ENCODE measurements at regions of chr19 and their contacts with region 1.

Region 1: GRCh38 chr19:29735800-29736199 is 20.7 kb upstream of the C19orf12 start:
- DNase-seq: no peak
- ATAC-seq: no peak
- H3K4me3 ChIP-seq: no peak overlapping the region
- H3K4me3 Mint-ChIP-seq: no peak overlapping the region
- H3K27ac ChIP-seq: no peak overlapping the region
- H3K27ac Mint-ChIP-seq: no peak overlapping the region
- H3K4me1 ChIP-seq: no peaks in the 10 kb centered on the region
- H3K4me1 Mint-ChIP-seq: no peaks in the 10 kb centered on the region
- H3K27me3 ChIP-seq: peaks cover 0 to under 1% (median 0%) of the 10 kb centered on the region in 4 experiments
- H3K27me3 Mint-ChIP-seq: peaks cover 16% of the 10 kb centered on the region
- CTCF ChIP-seq: no peak

Region 2: DNA sequence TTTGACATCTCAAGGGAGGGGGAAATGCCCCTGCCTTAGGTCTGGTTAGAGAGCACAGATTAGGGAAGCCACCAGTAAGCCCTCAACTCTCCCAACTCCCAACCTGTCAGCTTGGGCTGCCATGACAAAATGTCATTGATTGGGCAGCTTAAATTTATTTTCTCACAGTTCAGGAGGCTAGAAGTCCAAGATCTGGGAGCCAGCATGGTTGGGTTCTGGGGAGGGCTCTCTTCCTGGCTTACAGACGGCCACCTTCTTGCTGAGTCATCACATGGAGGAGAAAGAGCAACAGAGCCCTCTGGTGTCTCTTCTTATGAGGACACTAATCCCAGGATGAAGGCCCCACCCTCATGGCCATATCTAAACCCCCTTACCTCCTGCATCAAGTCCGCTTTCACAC is 45.0 kb before region 1 on chr19:
- CTCF ChIA-PET with region 1: no interaction called
- POLR2A ChIA-PET with region 1: no interaction called
- intact Hi-C with region 1: no loop called
- DNase-seq: peak; percentile 56
- ATAC-seq: peak; percentile 59
- H3K4me3 ChIP-seq: no peak overlapping the region
- H3K4me3 Mint-ChIP-seq: no peak overlapping the region
- H3K27ac ChIP-seq: no peak overlapping the region
- H3K27ac Mint-ChIP-seq: no peak overlapping the region
- H3K4me1 ChIP-seq: peaks cover 21 to 23% of the 10 kb centered on the region in 2 donors
- H3K4me1 Mint-ChIP-seq: peaks cover 22% of the 10 kb centered on the region
- H3K27me3 ChIP-seq: no peaks in the 10 kb centered on the region
- H3K27me3 Mint-ChIP-seq: no peaks in the 10 kb centered on the region
- CTCF ChIP-seq: peak; percentile 32

Region 3: DNA sequence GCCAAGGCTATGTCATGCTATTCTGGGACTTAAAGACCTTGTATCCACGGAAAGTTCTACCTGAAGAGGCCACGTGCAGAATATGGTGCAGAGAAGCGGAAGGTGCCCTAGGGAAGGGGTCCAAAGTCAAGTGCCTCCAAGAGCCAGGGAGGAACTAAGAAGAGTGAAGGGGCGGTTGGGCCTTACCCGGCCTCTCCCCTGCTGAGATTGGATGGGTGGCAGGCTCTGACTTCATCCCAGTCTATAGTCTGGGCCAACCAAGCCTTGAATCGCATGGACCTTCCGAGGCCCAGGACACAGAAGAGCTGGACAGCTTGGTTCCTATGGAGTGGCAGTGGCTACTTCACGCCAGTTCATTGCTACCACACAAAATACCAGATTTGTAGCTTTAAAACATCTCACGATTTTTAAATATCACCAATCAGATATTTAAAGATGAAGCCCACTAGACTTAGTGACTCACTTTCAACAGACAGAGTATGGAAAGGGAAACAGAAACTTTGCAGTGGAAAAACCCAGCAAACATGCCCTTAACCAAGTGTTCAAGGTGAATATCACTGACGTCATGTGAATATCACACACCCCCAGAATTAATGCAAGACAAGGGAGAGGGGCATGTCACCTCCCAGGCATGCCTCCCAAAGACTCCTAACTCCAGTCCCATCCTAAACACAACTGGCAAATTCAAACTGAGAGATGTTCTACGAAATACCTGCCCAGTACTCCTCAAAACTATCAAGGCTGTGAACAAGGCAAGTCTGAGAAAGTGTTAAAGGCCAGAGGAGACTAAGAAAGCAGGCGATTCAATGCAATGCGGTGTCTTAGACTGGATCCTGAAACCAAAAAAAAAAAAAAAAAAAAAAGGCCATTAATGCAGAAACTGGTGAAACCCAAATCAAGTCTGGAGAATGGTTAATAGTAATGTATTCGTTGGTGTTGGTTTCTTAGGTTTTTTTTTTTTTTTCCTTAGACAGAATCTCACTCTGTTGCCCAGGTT is 30.9 kb before region 1 on chr19:
- CTCF ChIA-PET with region 1: no interaction called
- POLR2A ChIA-PET with region 1: no interaction called
- intact Hi-C with region 1: no loop called
- DNase-seq: no peak
- ATAC-seq: peak; percentile 36
- H3K4me3 ChIP-seq: no peak overlapping the region
- H3K4me3 Mint-ChIP-seq: peak overlapping the region; percentile 45
- H3K27ac ChIP-seq: no peak overlapping the region
- H3K27ac Mint-ChIP-seq: peak overlapping the region; percentile 81
- H3K4me1 ChIP-seq: peaks cover 2 to 4% of the 10 kb centered on the region in 2 donors
- H3K4me1 Mint-ChIP-seq: peaks cover 16% of the 10 kb centered on the region
- H3K27me3 ChIP-seq: no peaks in the 10 kb centered on the region
- H3K27me3 Mint-ChIP-seq: no peaks in the 10 kb centered on the region
- CTCF ChIP-seq: no peak

Region 4: DNA sequence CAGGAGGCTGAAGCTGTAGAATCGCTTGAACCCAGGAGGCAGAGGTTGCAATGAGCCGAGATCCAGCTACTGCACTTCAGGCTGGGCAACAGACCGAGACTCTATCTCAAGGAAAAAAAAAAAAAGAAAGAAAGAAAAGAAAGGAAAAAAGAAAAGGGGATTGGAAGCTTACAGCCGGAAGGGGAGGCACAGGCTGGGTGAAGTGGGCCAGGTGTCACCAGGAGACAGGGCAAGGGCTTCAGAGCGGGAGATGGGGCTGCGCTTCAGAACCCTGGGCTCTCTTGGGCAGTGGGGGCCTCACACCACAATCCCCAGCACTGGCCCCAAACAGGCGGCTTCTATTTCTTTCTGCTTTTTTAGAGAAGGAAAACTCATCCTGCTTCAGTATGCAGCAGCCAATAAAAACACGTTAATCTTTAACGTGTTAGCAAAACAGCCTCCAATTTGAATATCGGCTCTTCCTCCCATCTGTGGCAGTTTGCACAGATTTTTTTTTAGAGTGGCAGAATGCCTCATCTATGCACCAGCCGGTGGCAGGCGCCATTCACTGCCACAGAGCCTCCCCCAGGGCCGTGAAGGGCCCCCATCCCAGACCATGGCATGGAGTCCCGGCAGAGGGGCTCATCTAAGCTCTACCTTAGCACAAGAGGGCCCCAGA is 25.9 kb after region 1 on chr19:
- CTCF ChIA-PET with region 1: interaction called, 14 read pairs
- POLR2A ChIA-PET with region 1: no interaction called
- intact Hi-C with region 1: loop called (anchors 1 kb)
- DNase-seq: no peak
- ATAC-seq: no peak
- H3K4me3 ChIP-seq: no peak overlapping the region
- H3K4me3 Mint-ChIP-seq: no peak overlapping the region
- H3K27ac ChIP-seq: no peak overlapping the region
- H3K27ac Mint-ChIP-seq: no peak overlapping the region
- H3K4me1 ChIP-seq: peaks cover 8% of the 10 kb centered on the region in 2 donors
- H3K4me1 Mint-ChIP-seq: peaks cover 3% of the 10 kb centered on the region
- H3K27me3 ChIP-seq: peaks cover 0 to 6% (median 0%) of the 10 kb centered on the region in 4 experiments
- H3K27me3 Mint-ChIP-seq: peaks cover 13% of the 10 kb centered on the region
- CTCF ChIP-seq: no peak

Region 5: GRCh38 chr19:29873024-29873800 is 137.4 kb after region 1 on chr19:
- CTCF ChIA-PET with region 1: interaction called, 100 read pairs
- POLR2A ChIA-PET with region 1: no interaction called
- intact Hi-C with region 1: loop called (anchors 1 kb)
- DNase-seq: peak; percentile 83
- ATAC-seq: peak; percentile 88
- H3K4me3 ChIP-seq: peak overlapping the region in 4 of 5 experiments; percentile 31 to 67 (median 54)
- H3K4me3 Mint-ChIP-seq: peak overlapping the region; percentile 84
- H3K27ac ChIP-seq: no peak overlapping the region
- H3K27ac Mint-ChIP-seq: no peak overlapping the region
- H3K4me1 ChIP-seq: peaks cover 17 to 44% of the 10 kb centered on the region in 2 donors
- H3K4me1 Mint-ChIP-seq: peaks cover 13% of the 10 kb centered on the region
- H3K27me3 ChIP-seq: peaks cover 0 to 27% (median 6%) of the 10 kb centered on the region in 4 experiments
- H3K27me3 Mint-ChIP-seq: peaks cover 23% of the 10 kb centered on the region
- CTCF ChIP-seq: peak; percentile 95

Region 6: DNA sequence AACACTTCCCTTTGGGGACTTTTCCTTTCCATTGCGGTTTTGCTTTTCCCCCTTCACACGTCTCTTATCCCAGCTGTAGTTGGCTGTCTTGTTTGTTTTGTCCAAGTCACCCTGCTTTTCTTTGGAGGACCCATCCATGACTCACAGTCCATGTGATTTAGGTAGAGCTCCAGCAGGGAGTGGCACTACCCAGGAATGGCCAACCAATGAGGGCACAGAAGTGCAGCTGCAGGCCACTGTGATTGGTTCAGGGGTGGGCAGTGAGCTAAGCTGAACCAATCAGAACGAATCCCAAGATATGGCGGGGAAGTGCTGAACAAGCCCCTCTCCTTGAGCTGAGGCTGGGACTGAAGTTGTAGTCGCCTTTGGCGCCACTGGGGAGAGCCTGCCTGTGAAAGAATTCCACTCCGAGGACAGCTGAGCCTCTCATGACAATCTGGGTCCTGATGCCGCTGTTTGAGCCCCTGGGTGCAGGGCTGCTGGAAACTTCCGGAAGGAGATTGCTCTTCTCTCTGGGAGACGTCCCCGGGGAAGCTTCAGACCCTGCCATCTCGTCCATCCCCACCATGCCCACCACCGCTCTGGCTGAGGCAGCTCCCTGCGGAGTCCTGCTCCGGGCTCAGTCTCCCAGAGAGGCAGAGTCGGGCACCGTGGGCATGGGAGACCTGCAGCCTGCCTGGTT is 143.3 kb after region 1 on chr19:
- CTCF ChIA-PET with region 1: interaction called, 100 read pairs
- POLR2A ChIA-PET with region 1: no interaction called
- intact Hi-C with region 1: no loop called
- DNase-seq: no peak
- ATAC-seq: no peak
- H3K4me3 ChIP-seq: no peak overlapping the region
- H3K4me3 Mint-ChIP-seq: no peak overlapping the region
- H3K27ac ChIP-seq: no peak overlapping the region
- H3K27ac Mint-ChIP-seq: no peak overlapping the region
- H3K4me1 ChIP-seq: peaks cover 10 to 64% of the 10 kb centered on the region in 2 donors
- H3K4me1 Mint-ChIP-seq: peaks cover 25% of the 10 kb centered on the region
- H3K27me3 ChIP-seq: no peaks in the 10 kb centered on the region
- H3K27me3 Mint-ChIP-seq: peaks cover 8% of the 10 kb centered on the region
- CTCF ChIP-seq: no peak

Region 7: GRCh38 chr19:30060531-30061222 is 324.9 kb after region 1 on chr19:
- CTCF ChIA-PET with region 1: no interaction called
- POLR2A ChIA-PET with region 1: no interaction called
- intact Hi-C with region 1: no loop called
- DNase-seq: no peak
- ATAC-seq: no peak
- H3K4me3 ChIP-seq: no peak overlapping the region
- H3K4me3 Mint-ChIP-seq: no peak overlapping the region
- H3K27ac ChIP-seq: no peak overlapping the region
- H3K27ac Mint-ChIP-seq: no peak overlapping the region
- H3K4me1 ChIP-seq: no peaks in the 10 kb centered on the region
- H3K4me1 Mint-ChIP-seq: no peaks in the 10 kb centered on the region
- H3K27me3 ChIP-seq: peaks cover 0 to 5% (median 0%) of the 10 kb centered on the region in 4 experiments
- H3K27me3 Mint-ChIP-seq: peaks cover 6% of the 10 kb centered on the region
- CTCF ChIP-seq: no peak

Region 8: DNA sequence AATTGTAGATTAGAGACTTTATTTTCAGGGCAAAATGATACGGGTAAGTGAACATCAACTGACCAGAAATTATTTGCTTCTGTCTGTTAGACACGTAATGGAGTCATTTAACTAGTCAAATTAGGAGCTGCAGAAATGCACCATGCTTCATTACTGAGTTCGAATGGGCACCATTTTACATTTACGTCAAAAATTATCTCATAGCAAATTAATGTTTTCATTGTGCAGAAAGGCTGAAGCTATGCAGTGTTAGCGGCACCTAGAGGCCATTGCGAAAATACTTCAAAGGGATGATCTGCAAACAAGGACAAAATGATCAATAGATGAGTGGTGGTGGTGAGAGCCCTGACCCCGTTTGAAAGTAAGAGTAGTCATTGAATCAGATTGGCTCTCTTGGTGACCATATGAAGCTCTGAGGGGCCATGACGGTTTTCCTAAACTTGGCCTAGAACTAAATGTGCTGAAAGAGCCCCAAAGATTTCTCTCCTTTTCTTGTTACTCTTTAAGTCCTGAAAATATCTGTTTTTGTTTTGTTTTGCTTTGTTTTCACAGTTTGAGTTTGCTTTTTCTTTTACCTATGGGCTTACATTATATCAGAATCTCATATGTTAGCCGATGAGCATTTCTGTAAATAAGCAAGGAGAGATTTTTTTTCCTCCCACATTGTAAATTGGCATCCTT is 914.3 kb after region 1 on chr19:
- CTCF ChIA-PET with region 1: interaction called, 4 read pairs
- POLR2A ChIA-PET with region 1: no interaction called
- intact Hi-C with region 1: loop called (anchors 5 kb)
- DNase-seq: peak; percentile 19
- ATAC-seq: no peak
- H3K4me3 ChIP-seq: no peak overlapping the region
- H3K4me3 Mint-ChIP-seq: no peak overlapping the region
- H3K27ac ChIP-seq: no peak overlapping the region
- H3K27ac Mint-ChIP-seq: no peak overlapping the region
- H3K4me1 ChIP-seq: no peaks in the 10 kb centered on the region
- H3K4me1 Mint-ChIP-seq: no peaks in the 10 kb centered on the region
- H3K27me3 ChIP-seq: peaks cover 0 to 2% (median 0%) of the 10 kb centered on the region in 4 experiments
- H3K27me3 Mint-ChIP-seq: peaks cover 4% of the 10 kb centered on the region
- CTCF ChIP-seq: peak; percentile 57